Naive thymus-derived CD4-positive, alpha-beta T cell (primary cell): ENCODE measurements at regions of chr11 and their contacts with region 1.

Region 1: GRCh38 chr11:9506489-9507276 is 45.9 kb downstream of the ZNF143 start:
- DNase-seq: peak; percentile 48 to 74 (median 66)
- ATAC-seq: peak; percentile 92
- H3K4me3 ChIP-seq: no peak overlapping the region
- H3K4me3 Mint-ChIP-seq: no peak overlapping the region
- H3K27ac ChIP-seq: no peak overlapping the region
- H3K27ac Mint-ChIP-seq: peak overlapping the region in 2 of 9 donors; percentile 35 to 52
- H3K4me1 ChIP-seq: no peaks in the 10 kb centered on the region
- H3K4me1 Mint-ChIP-seq: peaks cover 0 to 13% (median 6%) of the 10 kb centered on the region in 7 donors
- H3K27me3 ChIP-seq: no peaks in the 10 kb centered on the region
- H3K27me3 Mint-ChIP-seq: no peaks in the 10 kb centered on the region

Region 2: DNA sequence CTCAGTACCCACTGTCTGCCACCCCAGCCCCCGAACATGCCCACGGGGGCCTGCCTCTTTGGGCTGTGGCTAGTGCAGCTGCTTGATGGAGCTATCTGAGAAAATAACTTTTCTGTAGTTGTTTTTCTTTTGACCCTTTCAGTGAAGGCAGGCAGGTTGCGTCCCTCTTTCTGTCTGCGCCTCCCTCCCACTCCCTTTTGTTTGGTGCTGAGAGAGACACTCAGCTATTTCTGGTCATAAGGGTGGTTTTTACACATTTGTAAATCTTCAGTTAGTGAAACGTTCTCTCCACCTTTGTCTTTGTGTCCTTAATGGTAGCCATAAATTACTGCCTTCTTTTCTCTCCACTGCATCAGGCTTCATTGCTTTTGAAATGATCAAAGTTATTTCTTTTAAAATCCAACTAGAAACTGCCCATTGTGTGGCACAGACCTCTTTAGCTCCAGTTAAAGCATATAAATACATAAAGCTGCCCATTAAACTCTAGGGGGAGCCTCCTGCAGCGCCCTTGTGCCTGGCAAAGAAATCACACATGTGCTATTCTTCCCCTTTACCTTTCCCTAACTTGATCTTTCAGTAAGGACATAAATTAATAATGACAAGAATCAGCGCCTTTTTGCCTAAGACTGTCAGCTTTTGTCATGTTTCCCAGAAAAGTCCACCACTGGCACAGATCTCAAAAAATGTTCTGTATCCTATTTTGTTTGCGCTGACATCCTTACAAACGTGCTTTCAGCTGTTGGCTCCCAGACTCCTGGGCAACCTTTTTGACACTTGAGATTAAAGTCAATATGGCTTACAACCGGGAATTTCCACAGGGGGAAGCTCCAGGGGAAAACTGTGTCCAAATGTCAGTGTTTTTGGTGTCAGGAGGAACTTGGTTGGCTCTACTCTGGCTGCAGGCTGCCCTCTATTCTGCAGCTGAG is 413.6 kb before region 1 on chr11:
- CTCF ChIA-PET with region 1: no interaction called
- POLR2A ChIA-PET with region 1: no interaction called
- intact Hi-C with region 1: loop called in 1 of 2 experiments (anchors 1 kb)
- DNase-seq: no peak
- ATAC-seq: no peak
- H3K4me3 ChIP-seq: no peak overlapping the region
- H3K4me3 Mint-ChIP-seq: peak overlapping the region in 9 of 10 donors; percentile 3 to 74 (median 38)
- H3K27ac ChIP-seq: no peak overlapping the region
- H3K27ac Mint-ChIP-seq: no peak overlapping the region
- H3K4me1 ChIP-seq: no peaks in the 10 kb centered on the region
- H3K4me1 Mint-ChIP-seq: peaks cover 0 to 16% (median 9%) of the 10 kb centered on the region in 7 donors
- H3K27me3 ChIP-seq: peaks cover 0 to 9% of the 10 kb centered on the region in 2 donors
- H3K27me3 Mint-ChIP-seq: peaks cover 56 to 68% (median 61%) of the 10 kb centered on the region in 5 donors

Region 3: GRCh38 chr11:9203691-9204311 is 302.9 kb before region 1 on chr11:
- CTCF ChIA-PET with region 1: interaction called, 6 read pairs
- POLR2A ChIA-PET with region 1: no interaction called
- intact Hi-C with region 1: loop called in 1 of 2 experiments (anchors 1 kb)
- DNase-seq: peak in 7 of 9 donors; percentile 13 to 50 (median 24)
- ATAC-seq: peak; percentile 61
- H3K4me3 ChIP-seq: no peak overlapping the region
- H3K4me3 Mint-ChIP-seq: no peak overlapping the region
- H3K27ac ChIP-seq: no peak overlapping the region
- H3K27ac Mint-ChIP-seq: peak overlapping the region in 2 of 9 donors; percentile 9 to 50
- H3K4me1 ChIP-seq: no peaks in the 10 kb centered on the region
- H3K4me1 Mint-ChIP-seq: peaks cover 15 to 55% (median 26%) of the 10 kb centered on the region in 7 donors
- H3K27me3 ChIP-seq: no peaks in the 10 kb centered on the region
- H3K27me3 Mint-ChIP-seq: no peaks in the 10 kb centered on the region

Region 4: DNA sequence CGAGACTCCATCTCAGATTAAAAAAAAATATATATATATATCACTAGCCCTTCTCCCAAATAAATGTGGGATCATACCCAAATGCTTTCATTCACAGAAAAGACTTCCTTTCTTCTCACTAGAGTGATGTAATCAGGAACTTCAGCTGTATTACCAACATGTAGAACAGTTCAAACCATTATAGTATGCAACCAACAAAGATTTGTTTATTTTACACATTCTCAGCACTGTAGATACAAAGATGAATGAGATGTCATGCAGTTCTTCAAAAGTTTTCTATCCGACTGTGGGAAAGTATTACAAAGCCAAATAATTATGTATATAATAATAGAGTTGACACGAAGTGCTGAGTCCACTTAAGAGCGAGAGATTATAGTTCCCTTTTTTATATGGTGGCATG is 68.1 kb before region 1 on chr11:
- CTCF ChIA-PET with region 1: no interaction called
- POLR2A ChIA-PET with region 1: no interaction called
- intact Hi-C with region 1: loop called in 1 of 2 experiments (anchors 5 kb)
- DNase-seq: no peak
- ATAC-seq: no peak
- H3K4me3 ChIP-seq: no peak overlapping the region
- H3K4me3 Mint-ChIP-seq: no peak overlapping the region
- H3K27ac ChIP-seq: no peak overlapping the region
- H3K27ac Mint-ChIP-seq: no peak overlapping the region
- H3K4me1 ChIP-seq: no peaks in the 10 kb centered on the region
- H3K4me1 Mint-ChIP-seq: no peaks in the 10 kb centered on the region
- H3K27me3 ChIP-seq: no peaks in the 10 kb centered on the region
- H3K27me3 Mint-ChIP-seq: no peaks in the 10 kb centered on the region

Region 5: GRCh38 chr11:9534791-9535781 is 28.4 kb after region 1 on chr11:
- CTCF ChIA-PET with region 1: interaction called, 13 read pairs
- POLR2A ChIA-PET with region 1: no interaction called
- intact Hi-C with region 1: no loop called
- DNase-seq: peak; percentile 34 to 83 (median 62)
- ATAC-seq: peak; percentile 84
- H3K4me3 ChIP-seq: no peak overlapping the region
- H3K4me3 Mint-ChIP-seq: no peak overlapping the region
- H3K27ac ChIP-seq: no peak overlapping the region
- H3K27ac Mint-ChIP-seq: no peak overlapping the region
- H3K4me1 ChIP-seq: no peaks in the 10 kb centered on the region
- H3K4me1 Mint-ChIP-seq: no peaks in the 10 kb centered on the region
- H3K27me3 ChIP-seq: no peaks in the 10 kb centered on the region
- H3K27me3 Mint-ChIP-seq: no peaks in the 10 kb centered on the region